AG04450 (cell line): ENCODE measurements at regions of chr19 and their contacts with region 1.

Region 1: GRCh38 chr19:29694669-29695627 is 20.1 kb downstream of the C19orf12 start:
- DNase-seq: no peak
- H3K4me3 ChIP-seq: no peak overlapping the region
- H3K27ac ChIP-seq: no peak overlapping the region
- H3K27me3 ChIP-seq: no peaks in the 10 kb centered on the region
- CTCF ChIP-seq: peak; percentile 91

Region 2: DNA sequence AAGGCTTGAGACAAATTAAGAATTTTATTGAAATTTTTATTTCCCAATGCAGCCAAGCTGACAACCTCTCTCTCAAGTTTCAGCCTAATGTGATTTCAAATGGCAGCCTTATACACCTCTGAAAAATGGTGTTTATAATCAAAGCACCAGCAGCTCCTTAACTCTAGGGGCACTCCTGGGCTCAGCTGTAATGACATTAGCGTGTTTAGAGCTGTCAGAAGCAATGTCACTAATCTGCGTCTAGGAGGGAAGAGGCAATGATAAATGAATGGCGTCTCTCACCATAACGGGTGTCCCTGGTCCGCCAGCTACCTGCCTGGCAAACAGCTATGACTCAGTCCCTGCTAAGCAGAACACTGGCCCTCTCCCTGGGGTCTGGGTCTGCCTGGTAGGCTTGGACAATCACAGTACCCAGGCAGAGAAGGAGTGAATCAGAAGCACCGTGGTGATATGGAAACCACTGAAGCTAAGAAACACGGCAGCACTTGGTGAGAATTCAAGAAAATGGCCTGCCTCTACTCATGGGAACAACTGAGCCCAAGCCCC is 301.0 kb before region 1 on chr19:
- CTCF ChIA-PET with region 1: no interaction called
- POLR2A ChIA-PET with region 1: no interaction called
- DNase-seq: no peak
- H3K4me3 ChIP-seq: no peak overlapping the region
- H3K27ac ChIP-seq: no peak overlapping the region
- H3K27me3 ChIP-seq: no peaks in the 10 kb centered on the region
- CTCF ChIP-seq: no peak

Region 3: GRCh38 chr19:29645911-29646310 is 49.0 kb before region 1 on chr19:
- CTCF ChIA-PET with region 1: interaction called, 13 read pairs
- POLR2A ChIA-PET with region 1: no interaction called
- DNase-seq: no peak
- H3K4me3 ChIP-seq: no peak overlapping the region
- H3K27ac ChIP-seq: no peak overlapping the region
- H3K27me3 ChIP-seq: peaks cover 5% of the 10 kb centered on the region
- CTCF ChIP-seq: no peak

Region 4: DNA sequence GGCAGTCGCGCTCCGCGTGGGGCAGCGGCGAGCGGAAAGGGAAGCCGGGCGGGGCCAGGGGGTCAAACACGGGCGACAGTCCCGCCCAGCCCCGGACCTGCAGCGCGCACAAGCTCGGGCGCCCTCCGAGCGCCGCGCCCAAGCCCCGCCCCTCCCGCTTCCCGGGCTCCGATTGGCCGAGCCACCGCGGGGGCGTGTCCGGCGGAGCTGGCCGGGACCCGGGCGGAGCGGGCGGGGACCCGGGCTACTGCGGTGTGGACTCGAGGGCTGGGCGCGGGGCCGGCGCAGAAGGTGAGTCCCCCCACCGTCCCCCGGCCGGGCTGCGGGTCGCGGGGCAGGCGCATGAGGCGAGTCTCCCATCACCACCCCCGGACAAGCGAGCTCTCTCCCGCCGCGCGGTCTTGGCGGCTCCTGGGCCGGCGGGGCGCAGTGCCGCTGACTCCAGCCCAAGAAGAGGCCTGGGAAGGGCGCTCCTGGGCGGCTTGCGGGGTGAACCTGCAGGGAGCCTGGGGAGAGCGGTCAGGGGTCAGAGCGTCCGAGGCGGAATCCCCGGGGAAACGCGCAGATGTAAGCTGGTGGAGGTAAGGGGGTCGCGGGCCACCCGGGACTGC is 29.6 kb before region 1 on chr19 and contains the start of gene PLEKHF1:
- CTCF ChIA-PET with region 1: interaction called, 19 read pairs
- POLR2A ChIA-PET with region 1: no interaction called
- DNase-seq: no peak
- H3K4me3 ChIP-seq: peak within 1 kb of the TSS; percentile 81
- H3K27ac ChIP-seq: peak within 1 kb of the TSS; percentile 81
- H3K27me3 ChIP-seq: no peaks in the 10 kb centered on the region
- CTCF ChIP-seq: no peak
- polyA plus RNA-seq, gene PLEKHF1: 5.4 and 6.4 TPM in 2 replicates

Region 5: GRCh38 chr19:29678161-29679106 is 16.5 kb before region 1 on chr19:
- CTCF ChIA-PET with region 1: interaction called, 20 read pairs
- POLR2A ChIA-PET with region 1: no interaction called
- DNase-seq: no peak
- H3K4me3 ChIP-seq: no peak overlapping the region
- H3K27ac ChIP-seq: no peak overlapping the region
- H3K27me3 ChIP-seq: no peaks in the 10 kb centered on the region
- CTCF ChIP-seq: no peak